ENCODE measurements at regions of chr10 and their contacts with region 1.

Region 1: GRCh38 chr10:11986593-11987216 is 55.9 kb downstream of the UPF2 start:
- DNase-seq: peak; percentile 69 to 85 (median 82)
- H3K4me3 ChIP-seq: no peak overlapping the region
- H3K27ac ChIP-seq: no peak overlapping the region
- H3K4me1 ChIP-seq: no peaks in the 10 kb centered on the region
- H3K27me3 ChIP-seq: no peaks in the 10 kb centered on the region
- CTCF ChIP-seq: peak; percentile 64 to 73 (median 68)
- EP300 ChIP-seq: no peak
- POLR2A ChIP-seq: no peak

Region 2: GRCh38 chr10:11742005-11742778 is 244.5 kb before region 1 on chr10 and contains the start of gene ECHDC3:
- intact Hi-C with region 1: no loop called
- DNase-seq: peak; percentile 36 to 76 (median 73)
- H3K4me3 ChIP-seq: peak within 1 kb of the TSS; percentile 42
- H3K27ac ChIP-seq: peak within 1 kb of the TSS; percentile 10 to 76
- H3K4me1 ChIP-seq: peaks cover 8% of the 10 kb centered on the region
- H3K27me3 ChIP-seq: no peaks in the 10 kb centered on the region
- CTCF ChIP-seq: no peak
- EP300 ChIP-seq: no peak
- POLR2A ChIP-seq: no peak
- total RNA-seq, gene ECHDC3: 13.1 to 33.2 (median 15.3) TPM

Region 3: GRCh38 chr10:11782793-11783557 is 203.7 kb before region 1 on chr10:
- intact Hi-C with region 1: loop called in 3 of 4 experiments (anchors 5 to 10 kb)
- DNase-seq: no peak
- H3K4me3 ChIP-seq: no peak overlapping the region
- H3K27ac ChIP-seq: no peak overlapping the region
- H3K4me1 ChIP-seq: no peaks in the 10 kb centered on the region
- H3K27me3 ChIP-seq: no peaks in the 10 kb centered on the region
- CTCF ChIP-seq: peak; percentile 34 to 71 (median 58)
- EP300 ChIP-seq: no peak
- POLR2A ChIP-seq: no peak